Common myeloid progenitor, CD34-positive (primary cell): ENCODE measurements at regions of chr1 and their contacts with region 1.

Region 1: DNA sequence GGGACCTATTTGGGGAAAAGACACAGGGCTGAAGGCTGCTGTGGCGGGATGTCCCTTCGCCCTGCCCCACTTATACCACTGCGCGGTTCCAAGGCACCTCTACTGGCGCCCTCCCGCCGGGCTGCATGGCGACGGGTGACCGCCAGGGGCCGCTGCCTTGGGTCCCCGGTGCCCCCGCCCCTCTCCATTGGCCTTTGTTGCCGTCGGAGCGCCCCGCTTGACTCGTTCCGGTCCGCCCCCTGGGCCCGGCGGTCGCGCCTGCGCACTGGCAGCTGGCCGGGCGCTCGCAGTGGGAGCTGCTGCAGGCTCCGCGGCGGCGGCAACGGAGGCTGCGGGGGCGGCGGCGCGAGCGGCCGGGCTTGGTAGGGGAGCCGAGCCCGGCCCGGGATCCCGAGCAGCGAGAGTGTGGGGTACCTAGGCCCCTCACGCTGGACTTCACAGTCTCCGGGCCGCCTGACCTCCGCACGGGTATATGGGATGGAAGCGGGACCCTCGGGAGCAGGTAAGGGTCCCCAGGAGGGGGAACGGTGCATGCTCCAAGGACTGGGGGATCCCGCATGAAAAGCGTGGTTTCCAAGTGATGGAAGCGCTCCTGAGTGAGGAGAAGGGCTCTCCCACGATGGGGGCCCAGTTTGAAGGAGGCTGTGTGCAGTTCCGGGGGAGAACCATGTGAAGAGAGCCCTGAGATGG is at the start of gene AGO1:
- DNase-seq: peak; percentile 93 to 96 (median 96)
- H3K4me3 ChIP-seq: peak within 1 kb of the TSS; percentile 75 to 99 (median 96)
- H3K27ac ChIP-seq: peak within 1 kb of the TSS; percentile 54 to 79
- H3K4me1 ChIP-seq: peaks cover 14 to 60% (median 50%) of the 10 kb centered on the region in 4 experiments
- H3K27me3 ChIP-seq: no peaks in the 10 kb centered on the region

Region 2: DNA sequence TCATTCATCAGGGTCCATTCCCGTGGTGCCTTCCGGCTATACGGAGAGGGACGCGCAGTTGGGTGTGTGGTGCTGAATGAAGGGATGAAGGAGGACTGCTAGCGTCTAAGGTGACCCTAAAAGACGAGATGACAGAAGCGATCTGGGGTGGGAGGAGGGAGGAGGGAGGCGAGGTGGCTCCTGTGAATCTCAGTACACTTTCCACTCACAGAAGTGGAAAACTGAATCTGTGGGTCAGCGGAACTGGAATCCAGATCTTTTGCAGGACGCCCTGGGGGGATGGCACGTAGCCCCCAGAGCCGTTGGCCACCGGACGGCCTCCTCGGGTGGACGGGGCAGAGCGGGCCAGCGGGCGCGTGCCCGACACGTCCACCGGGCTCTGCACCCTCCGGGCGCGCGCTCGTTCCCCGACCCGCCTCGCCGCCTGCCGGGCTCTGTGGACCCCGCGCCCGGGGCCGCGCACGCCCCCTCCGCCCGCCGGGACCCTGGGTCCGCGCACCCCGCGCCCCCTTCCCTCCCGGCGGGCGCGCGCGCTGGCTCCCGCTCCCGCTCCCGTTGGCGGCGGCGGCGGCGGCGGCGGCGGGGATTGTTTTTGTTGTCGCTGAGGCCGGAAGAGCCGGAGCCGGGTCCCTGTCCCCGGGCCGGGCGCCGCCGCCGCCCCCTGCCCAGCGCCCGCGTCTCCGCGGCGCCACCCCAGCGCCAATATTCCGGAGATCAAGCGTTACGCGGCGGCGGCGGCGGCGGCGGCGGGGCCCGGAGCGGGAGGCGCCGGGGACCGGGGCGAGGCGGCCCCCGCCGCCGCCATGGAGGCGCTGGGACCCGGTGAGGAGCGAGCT is 75.3 kb before region 1 on chr1 and contains the start of gene AGO4:
- CTCF ChIA-PET with region 1: no interaction called
- POLR2A ChIA-PET with region 1: no interaction called
- DNase-seq: peak; percentile 33 to 75 (median 50)
- H3K4me3 ChIP-seq: peak within 1 kb of the TSS; percentile 77 to 92 (median 86)
- H3K27ac ChIP-seq: peak within 1 kb of the TSS; percentile 77 to 90
- H3K4me1 ChIP-seq: peaks cover 13 to 41% (median 24%) of the 10 kb centered on the region in 4 experiments
- H3K27me3 ChIP-seq: no peaks in the 10 kb centered on the region

Region 3: GRCh38 chr1:35860696-35861095 is 22.4 kb before region 1 on chr1:
- CTCF ChIA-PET with region 1: interaction called, 11 read pairs
- POLR2A ChIA-PET with region 1: interaction called, 3 read pairs
- DNase-seq: peak in 2 of 3 donors; percentile 45 to 60
- H3K4me3 ChIP-seq: no peak overlapping the region
- H3K27ac ChIP-seq: no peak overlapping the region
- H3K4me1 ChIP-seq: peaks cover 0 to 23% (median 6%) of the 10 kb centered on the region in 4 experiments
- H3K27me3 ChIP-seq: no peaks in the 10 kb centered on the region

Region 4: DNA sequence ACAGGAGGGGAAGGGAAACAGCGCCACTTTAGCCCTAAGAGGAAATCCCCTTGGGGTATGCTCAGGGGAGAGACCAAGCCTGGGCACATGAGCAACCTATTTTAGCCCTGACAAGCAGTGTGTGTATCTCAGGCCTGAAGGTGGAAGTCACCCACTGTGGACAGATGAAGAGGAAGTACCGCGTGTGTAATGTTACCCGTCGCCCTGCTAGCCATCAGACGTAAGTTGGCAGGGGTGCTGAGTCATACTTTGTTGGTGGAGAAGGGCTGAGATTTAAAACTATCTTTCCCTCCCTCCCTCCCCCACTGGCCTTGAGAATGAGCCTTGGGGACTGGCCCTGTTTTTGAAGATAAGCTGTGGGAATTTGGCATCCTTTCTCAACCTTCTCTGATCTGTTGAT is 11.1 kb after region 1 on chr1:
- CTCF ChIA-PET with region 1: interaction called, 27 read pairs
- POLR2A ChIA-PET with region 1: interaction called, 3 read pairs
- DNase-seq: peak; percentile 73 to 94 (median 94)
- H3K4me3 ChIP-seq: no peak overlapping the region
- H3K27ac ChIP-seq: peak overlapping the region in 1 of 2 experiments; percentile 46
- H3K4me1 ChIP-seq: peaks cover 0 to 15% (median 11%) of the 10 kb centered on the region in 4 experiments
- H3K27me3 ChIP-seq: no peaks in the 10 kb centered on the region